ENCODE measurements at regions of chr22 and their contacts with region 1.

Region 1: DNA sequence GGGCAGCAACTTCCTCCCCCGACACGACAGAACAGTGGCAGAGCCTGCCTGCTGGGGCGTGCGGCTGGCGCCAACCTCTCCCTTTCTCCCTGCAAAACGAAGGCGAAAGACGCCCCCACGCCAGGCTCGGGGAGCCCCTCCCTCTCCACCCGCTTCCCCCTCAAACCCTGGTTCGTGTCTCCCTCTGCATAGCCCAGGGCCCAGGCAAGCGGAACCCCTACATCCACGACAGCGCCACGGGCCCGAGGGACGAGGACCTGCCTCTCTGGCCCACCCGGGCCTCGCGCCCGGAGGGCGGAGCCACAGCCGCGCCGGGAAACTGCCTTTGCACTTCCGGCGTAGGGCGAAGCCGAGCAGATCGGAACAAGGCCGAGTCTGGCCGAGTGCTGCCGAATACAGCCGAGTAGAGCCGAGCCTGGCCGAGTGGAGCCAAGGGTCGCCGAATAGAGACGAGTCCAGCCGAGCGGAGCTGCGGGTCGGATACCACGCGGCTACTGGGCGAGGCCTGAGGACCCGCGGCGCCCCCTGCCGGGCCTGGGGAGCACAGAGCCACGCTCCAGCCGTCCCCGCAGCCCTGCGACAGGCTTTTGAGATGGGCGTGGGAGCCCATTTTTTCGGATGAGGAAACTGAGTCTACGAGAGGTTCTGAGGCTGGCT is 11.2 kb upstream of the C1QTNF6 start:
- DNase-seq: peak; percentile 100
- H3K4me3 Mint-ChIP-seq: peak overlapping the region; percentile 81
- H3K27ac Mint-ChIP-seq: peak overlapping the region; percentile 96
- H3K4me1 Mint-ChIP-seq: peaks cover 48% of the 10 kb centered on the region
- H3K27me3 Mint-ChIP-seq: no peaks in the 10 kb centered on the region

Region 2: GRCh38 chr22:36856121-36856791 is 343.0 kb before region 1 on chr22:
- CTCF ChIA-PET with region 1: no interaction called
- intact Hi-C with region 1: loop called (anchors 2 kb)
- DNase-seq: peak; percentile 96
- H3K4me3 Mint-ChIP-seq: no peak overlapping the region
- H3K27ac Mint-ChIP-seq: no peak overlapping the region
- H3K4me1 Mint-ChIP-seq: peaks cover 16% of the 10 kb centered on the region
- H3K27me3 Mint-ChIP-seq: peaks cover 2% of the 10 kb centered on the region

Region 3: GRCh38 chr22:37043828-37044538 is 155.2 kb before region 1 on chr22:
- CTCF ChIA-PET with region 1: interaction called, 17 read pairs
- intact Hi-C with region 1: loop called (anchors 1 kb)
- DNase-seq: peak; percentile 70
- H3K4me3 Mint-ChIP-seq: no peak overlapping the region
- H3K27ac Mint-ChIP-seq: no peak overlapping the region
- H3K4me1 Mint-ChIP-seq: peaks cover 21% of the 10 kb centered on the region
- H3K27me3 Mint-ChIP-seq: no peaks in the 10 kb centered on the region

Region 4: GRCh38 chr22:37121887-37122591 is 77.2 kb before region 1 on chr22:
- CTCF ChIA-PET with region 1: interaction called, 29 read pairs
- intact Hi-C with region 1: loop called (anchors 1 kb)
- DNase-seq: peak; percentile 98
- H3K4me3 Mint-ChIP-seq: peak overlapping the region; percentile 85
- H3K27ac Mint-ChIP-seq: peak overlapping the region; percentile 99
- H3K4me1 Mint-ChIP-seq: peaks cover 73% of the 10 kb centered on the region
- H3K27me3 Mint-ChIP-seq: no peaks in the 10 kb centered on the region

Region 5: GRCh38 chr22:37166675-37167066 is 32.6 kb before region 1 on chr22:
- CTCF ChIA-PET with region 1: interaction called, 39 read pairs
- intact Hi-C with region 1: loop called (anchors 1 kb)
- DNase-seq: peak; percentile 94
- H3K4me3 Mint-ChIP-seq: peak overlapping the region; percentile 66
- H3K27ac Mint-ChIP-seq: peak overlapping the region; percentile 79
- H3K4me1 Mint-ChIP-seq: peaks cover 77% of the 10 kb centered on the region
- H3K27me3 Mint-ChIP-seq: no peaks in the 10 kb centered on the region

Region 6: GRCh38 chr22:37229805-37230672 is 30.8 kb after region 1 on chr22:
- CTCF ChIA-PET with region 1: interaction called, 13 read pairs
- intact Hi-C with region 1: no loop called
- DNase-seq: peak; percentile 98
- H3K4me3 Mint-ChIP-seq: peak overlapping the region; percentile 67
- H3K27ac Mint-ChIP-seq: peak overlapping the region; percentile 98
- H3K4me1 Mint-ChIP-seq: peaks cover 90% of the 10 kb centered on the region
- H3K27me3 Mint-ChIP-seq: no peaks in the 10 kb centered on the region

Region 7: GRCh38 chr22:37260901-37261336 is 61.7 kb after region 1 on chr22:
- CTCF ChIA-PET with region 1: interaction called, 47 read pairs
- intact Hi-C with region 1: loop called (anchors 2 kb)
- DNase-seq: peak; percentile 75
- H3K4me3 Mint-ChIP-seq: no peak overlapping the region
- H3K27ac Mint-ChIP-seq: no peak overlapping the region
- H3K4me1 Mint-ChIP-seq: peaks cover 34% of the 10 kb centered on the region
- H3K27me3 Mint-ChIP-seq: no peaks in the 10 kb centered on the region

Region 8: DNA sequence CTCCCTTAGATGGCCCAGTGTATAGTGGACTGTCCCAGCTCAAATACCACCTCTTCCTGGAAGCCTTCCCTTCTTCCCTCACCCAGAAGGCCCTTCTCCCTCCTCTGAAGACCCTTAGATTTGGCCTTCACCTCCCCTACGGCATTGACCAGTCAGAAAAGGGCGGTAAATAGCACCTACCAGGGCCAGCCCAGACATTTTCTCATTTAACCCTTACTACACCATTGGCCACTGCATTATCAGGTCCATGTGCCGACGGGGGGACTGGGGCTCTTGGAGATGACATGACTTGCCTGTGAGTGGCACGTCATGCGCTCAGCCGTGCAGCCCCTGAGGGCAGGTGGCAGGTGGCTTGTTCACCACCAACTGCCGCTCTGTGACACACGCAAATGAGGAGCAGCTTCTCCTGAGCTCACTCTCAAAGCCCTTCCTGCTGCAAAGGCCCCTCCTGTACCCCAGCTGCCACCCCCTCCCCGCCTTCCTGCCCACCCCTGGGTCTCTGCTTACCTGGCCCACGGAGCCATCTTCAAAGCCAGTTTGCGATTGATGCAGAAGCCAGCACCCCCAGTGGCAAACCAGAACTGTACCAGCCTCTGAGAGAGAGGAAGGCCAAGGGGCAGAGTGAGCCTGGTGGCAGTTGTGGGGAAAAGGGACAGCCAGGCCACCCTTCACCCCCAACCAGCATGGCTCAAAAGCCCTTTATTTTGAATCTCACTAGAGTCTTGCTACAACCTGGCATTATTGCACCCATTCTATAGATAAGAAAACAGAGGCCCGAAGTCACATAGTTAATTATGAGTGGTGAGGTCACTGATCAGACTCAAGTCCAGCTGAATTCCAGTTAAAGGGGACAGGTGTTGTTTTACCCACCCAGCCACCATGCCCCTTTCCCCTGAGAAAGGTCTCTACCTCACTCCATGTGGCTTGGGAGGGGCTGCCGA is 277.4 kb after region 1 on chr22:
- CTCF ChIA-PET with region 1: no interaction called
- intact Hi-C with region 1: no loop called
- DNase-seq: no peak
- H3K4me3 Mint-ChIP-seq: no peak overlapping the region
- H3K27ac Mint-ChIP-seq: no peak overlapping the region
- H3K4me1 Mint-ChIP-seq: peaks cover 7% of the 10 kb centered on the region
- H3K27me3 Mint-ChIP-seq: no peaks in the 10 kb centered on the region